Dendritic cell treated with granulocyte-macrophage colony-stimulating factor and Interleukin-4, amounts not matched to agents 40 ng/mL and 50 ng/mL, for 4 days (primary cell): ENCODE measurements at regions of chr10 and their contacts with region 1.

Region 1: GRCh38 chr10:77111611-77112550 is 525.7 kb downstream of the KCNMA1 start:
- H3K4me3 Mint-ChIP-seq: no peak overlapping the region
- H3K27ac Mint-ChIP-seq: no peak overlapping the region
- H3K4me1 Mint-ChIP-seq: no peaks in the 10 kb centered on the region
- H3K27me3 Mint-ChIP-seq: peaks cover 9% of the 10 kb centered on the region

Region 2: DNA sequence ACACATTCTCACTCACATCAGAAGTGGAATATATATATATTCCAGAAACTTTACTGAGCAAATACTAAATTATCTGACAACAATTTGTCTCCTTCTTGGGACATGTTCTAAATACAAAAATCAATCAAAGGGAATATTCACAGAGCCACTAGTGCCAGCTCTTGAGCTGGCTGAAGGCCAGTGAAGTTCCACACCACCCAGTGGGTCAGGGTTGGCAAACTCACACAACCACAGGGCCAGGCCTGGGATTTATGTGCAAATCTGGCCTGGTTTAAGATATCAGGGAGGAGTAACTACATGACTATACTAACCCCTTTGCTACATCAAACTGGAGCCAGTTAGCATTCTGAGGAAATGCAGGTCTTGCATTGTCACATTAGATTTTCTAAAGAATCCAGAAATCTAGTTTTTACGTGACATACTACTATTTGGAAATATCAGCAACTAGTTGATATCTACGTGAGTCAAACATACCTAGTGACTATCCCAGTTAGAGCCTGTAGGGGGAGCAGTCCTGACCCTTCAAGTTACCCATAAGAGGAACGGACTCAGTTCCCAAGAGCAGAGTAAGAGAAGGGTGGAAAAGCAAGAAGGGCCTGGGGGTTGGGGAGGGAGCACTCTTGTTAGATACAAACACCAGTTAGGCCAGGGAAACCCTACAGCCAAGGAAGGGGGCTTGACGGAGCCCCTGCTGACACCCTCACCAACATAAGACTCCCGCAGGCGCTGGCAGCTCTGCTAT is 74.7 kb before region 1 on chr10:
- intact Hi-C with region 1: loop called (anchors 1 kb)
- H3K4me3 Mint-ChIP-seq: no peak overlapping the region
- H3K27ac Mint-ChIP-seq: no peak overlapping the region
- H3K4me1 Mint-ChIP-seq: peaks cover 14% of the 10 kb centered on the region
- H3K27me3 Mint-ChIP-seq: peaks cover 7% of the 10 kb centered on the region

Region 3: GRCh38 chr10:77084431-77085144 is 27.3 kb before region 1 on chr10:
- intact Hi-C with region 1: no loop called
- H3K4me3 Mint-ChIP-seq: no peak overlapping the region
- H3K27ac Mint-ChIP-seq: no peak overlapping the region
- H3K4me1 Mint-ChIP-seq: peaks cover 13% of the 10 kb centered on the region
- H3K27me3 Mint-ChIP-seq: peaks cover 11% of the 10 kb centered on the region

Region 4: GRCh38 chr10:77185696-77186095 is 73.8 kb after region 1 on chr10:
- intact Hi-C with region 1: no loop called
- H3K4me3 Mint-ChIP-seq: no peak overlapping the region
- H3K27ac Mint-ChIP-seq: no peak overlapping the region
- H3K4me1 Mint-ChIP-seq: no peaks in the 10 kb centered on the region
- H3K27me3 Mint-ChIP-seq: peaks cover 2% of the 10 kb centered on the region